ENCODE measurements at regions of chr4 and their contacts with region 1.

Region 1: DNA sequence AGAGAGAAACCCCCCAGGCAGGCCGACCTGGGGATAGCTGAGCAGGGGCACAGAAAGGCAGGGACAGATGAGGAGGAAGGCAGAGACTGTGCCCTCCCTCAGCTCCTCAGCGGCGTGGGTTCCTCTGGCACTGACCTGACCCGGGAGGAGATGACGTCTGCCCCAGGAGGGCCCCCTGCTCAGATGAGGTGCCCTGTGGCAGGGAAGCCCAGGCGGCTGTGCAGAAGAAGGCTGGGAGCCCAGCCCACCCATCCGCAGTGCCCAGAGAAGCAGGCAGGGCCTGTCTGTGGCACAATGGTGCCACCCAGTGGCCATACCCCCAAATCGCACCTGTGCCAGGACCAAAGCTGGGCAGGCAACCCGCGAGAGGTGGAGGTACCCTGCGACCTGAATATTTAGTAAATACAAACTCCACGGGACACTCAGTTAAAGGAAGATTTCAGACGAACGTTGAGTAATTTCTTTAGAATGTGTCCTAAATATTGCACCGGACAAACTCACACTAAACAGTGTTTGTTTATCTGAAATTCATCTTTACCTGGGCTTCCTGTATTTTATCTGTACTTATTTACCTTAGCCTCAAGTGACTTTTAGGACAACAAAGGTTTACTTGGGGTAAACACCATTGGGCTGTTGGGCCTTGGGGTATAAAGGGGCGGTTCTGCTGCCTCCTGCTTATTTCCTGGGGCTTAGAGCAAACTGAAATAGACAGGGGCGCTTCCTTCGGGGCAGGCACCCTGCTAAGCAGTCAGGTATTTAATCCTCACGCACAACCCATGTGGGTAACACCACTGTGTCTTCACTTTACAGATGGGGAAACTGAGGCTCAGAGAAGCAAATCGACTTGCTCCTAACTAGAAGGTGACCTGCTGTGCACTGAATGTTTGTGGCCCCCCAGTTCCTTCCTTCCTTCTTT is 46.5 kb upstream of the HMX1 start:
- DNase-seq: no peak
- ATAC-seq: peak; percentile 99
- H3K4me3 ChIP-seq: no peak overlapping the region
- H3K27ac ChIP-seq: no peak overlapping the region
- H3K4me1 ChIP-seq: no peaks in the 10 kb centered on the region
- H3K27me3 ChIP-seq: no peaks in the 10 kb centered on the region
- CTCF ChIP-seq: peak; percentile 89 to 94 (median 92)
- EP300 ChIP-seq: no peak
- POLR2A ChIP-seq: no peak
- RAD21 ChIP-seq: peak; percentile 87

Region 2: GRCh38 chr4:8468746-8469535 is 449.2 kb before region 1 on chr4:
- CTCF ChIA-PET with region 1: no interaction called
- POLR2A ChIA-PET with region 1: no interaction called
- RAD21 ChIA-PET with region 1: no interaction called
- SMC1A ChIA-PET with region 1: no interaction called
- in situ Hi-C with region 1: no loop called
- intact Hi-C with region 1: loop called (anchors 5 kb)
- DNase-seq: peak; percentile 5
- ATAC-seq: peak; percentile 96
- H3K4me3 ChIP-seq: no peak overlapping the region
- H3K27ac ChIP-seq: no peak overlapping the region
- H3K4me1 ChIP-seq: no peaks in the 10 kb centered on the region
- H3K27me3 ChIP-seq: no peaks in the 10 kb centered on the region
- CTCF ChIP-seq: peak; percentile 90 to 98 (median 92)
- EP300 ChIP-seq: no peak
- POLR2A ChIP-seq: no peak
- RAD21 ChIP-seq: peak; percentile 82

Region 3: GRCh38 chr4:8607603-8608481 is 310.3 kb before region 1 on chr4:
- CTCF ChIA-PET with region 1: interaction called, 11 read pairs
- POLR2A ChIA-PET with region 1: no interaction called
- RAD21 ChIA-PET with region 1: interaction called, 8 read pairs
- SMC1A ChIA-PET with region 1: interaction called, 6 read pairs
- in situ Hi-C with region 1: loop called (anchors 10 kb)
- intact Hi-C with region 1: loop called (anchors 1 kb)
- DNase-seq: no peak
- ATAC-seq: peak; percentile 85
- H3K4me3 ChIP-seq: no peak overlapping the region
- H3K27ac ChIP-seq: no peak overlapping the region
- H3K4me1 ChIP-seq: no peaks in the 10 kb centered on the region
- H3K27me3 ChIP-seq: no peaks in the 10 kb centered on the region
- CTCF ChIP-seq: peak; percentile 70 to 98 (median 83)
- EP300 ChIP-seq: no peak
- POLR2A ChIP-seq: no peak
- RAD21 ChIP-seq: peak; percentile 67

Region 4: DNA sequence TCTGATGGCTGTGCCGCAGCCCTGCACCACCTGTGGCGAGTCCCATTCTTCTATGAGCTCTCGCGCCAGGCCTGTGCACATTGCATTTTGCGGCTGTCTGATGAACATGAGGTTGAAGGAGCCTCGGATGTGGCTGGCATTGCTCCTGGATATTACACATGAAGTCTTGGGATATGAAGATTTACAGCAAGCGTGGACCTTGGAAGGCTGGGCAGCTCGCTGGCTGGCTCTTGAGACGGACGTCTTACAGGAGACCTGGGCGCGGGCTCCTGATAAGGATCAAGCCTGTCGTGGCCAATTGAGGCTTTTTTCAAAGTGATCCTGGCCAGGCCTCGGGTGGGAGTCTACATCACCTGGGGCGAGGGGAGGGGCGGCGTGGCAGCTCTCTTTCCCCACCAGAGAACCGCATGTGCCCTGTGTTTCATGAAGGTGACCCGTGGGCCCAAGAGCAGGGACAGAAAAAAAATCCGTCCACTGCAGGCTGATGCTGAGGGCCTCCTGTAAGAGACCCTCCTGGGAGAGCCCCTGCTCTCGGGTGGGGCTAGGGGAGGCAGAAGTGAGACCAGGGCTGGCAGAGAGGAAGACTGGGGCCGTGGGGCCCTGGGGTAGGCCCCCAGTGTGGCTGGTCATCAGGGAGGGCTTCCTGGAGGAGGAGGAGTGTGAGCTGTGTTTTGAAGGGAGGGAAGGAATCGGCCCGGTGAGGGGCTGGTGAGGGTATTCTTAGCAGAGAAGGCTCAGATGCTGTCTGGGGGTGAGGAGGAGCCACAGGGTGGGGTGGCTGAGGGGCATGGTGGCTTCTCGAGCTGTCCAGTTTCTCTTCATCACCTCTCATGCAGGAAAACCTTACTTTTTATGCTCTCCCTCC is 302.0 kb before region 1 on chr4:
- CTCF ChIA-PET with region 1: no interaction called
- POLR2A ChIA-PET with region 1: no interaction called
- RAD21 ChIA-PET with region 1: no interaction called
- SMC1A ChIA-PET with region 1: no interaction called
- in situ Hi-C with region 1: loop called (anchors 10 kb)
- intact Hi-C with region 1: no loop called
- DNase-seq: no peak
- ATAC-seq: no peak
- H3K4me3 ChIP-seq: no peak overlapping the region
- H3K27ac ChIP-seq: no peak overlapping the region
- H3K4me1 ChIP-seq: no peaks in the 10 kb centered on the region
- H3K27me3 ChIP-seq: no peaks in the 10 kb centered on the region; a peak in 1 of 4 replicates
- CTCF ChIP-seq: no peak
- EP300 ChIP-seq: no peak
- POLR2A ChIP-seq: no peak
- RAD21 ChIP-seq: no peak

Region 5: GRCh38 chr4:8688041-8688937 is 229.8 kb before region 1 on chr4:
- CTCF ChIA-PET with region 1: interaction called, 6 read pairs
- POLR2A ChIA-PET with region 1: no interaction called
- RAD21 ChIA-PET with region 1: no interaction called
- SMC1A ChIA-PET with region 1: no interaction called
- in situ Hi-C with region 1: no loop called
- intact Hi-C with region 1: loop called (anchors 1 kb)
- DNase-seq: no peak
- ATAC-seq: peak; percentile 67
- H3K4me3 ChIP-seq: no peak overlapping the region
- H3K27ac ChIP-seq: no peak overlapping the region
- H3K4me1 ChIP-seq: no peaks in the 10 kb centered on the region
- H3K27me3 ChIP-seq: no peaks in the 10 kb centered on the region
- CTCF ChIP-seq: peak; percentile 32 to 60 (median 42); a peak in 4 of 6 replicates
- EP300 ChIP-seq: no peak
- POLR2A ChIP-seq: no peak
- RAD21 ChIP-seq: peak; percentile 37

Region 6: DNA sequence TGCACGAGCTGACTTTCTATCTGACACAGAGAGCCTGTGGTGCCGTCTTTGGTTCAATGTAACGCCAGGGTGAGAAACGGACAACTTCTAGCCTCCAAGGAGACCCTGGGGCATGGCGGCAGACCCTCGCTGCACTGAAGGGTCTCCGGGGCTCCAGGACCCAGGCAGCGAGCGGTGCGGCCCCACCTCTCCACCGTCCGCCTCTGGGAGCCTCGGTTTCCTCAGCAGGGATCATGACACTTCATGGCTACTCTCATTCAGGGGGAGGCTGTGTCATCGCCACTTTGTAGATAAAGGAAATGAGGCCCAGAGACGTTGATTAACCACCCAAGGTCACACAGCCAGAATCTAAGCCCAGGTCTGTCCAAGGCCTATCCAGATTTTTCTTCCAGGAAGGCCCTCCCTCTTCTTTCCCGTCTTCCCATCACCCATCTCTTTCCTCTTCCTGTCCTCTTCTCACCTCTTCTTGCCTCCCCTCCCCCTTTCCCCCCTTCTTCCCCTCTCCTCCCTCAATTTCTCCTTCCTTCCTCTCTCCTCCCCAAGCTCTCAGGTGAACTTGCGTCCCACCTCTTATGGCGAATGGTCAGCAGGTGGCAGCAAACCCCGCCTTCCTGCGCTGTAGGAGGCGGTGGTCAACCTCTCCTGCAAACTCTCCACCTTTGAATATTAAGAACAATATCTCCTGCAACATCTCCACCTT is 22.8 kb after region 1 on chr4:
- CTCF ChIA-PET with region 1: no interaction called
- POLR2A ChIA-PET with region 1: no interaction called
- RAD21 ChIA-PET with region 1: no interaction called
- SMC1A ChIA-PET with region 1: no interaction called
- in situ Hi-C with region 1: no loop called
- intact Hi-C with region 1: no loop called
- DNase-seq: no peak
- ATAC-seq: peak; percentile 46; the same call in 1 of the 3 replicates
- H3K4me3 ChIP-seq: no peak overlapping the region
- H3K27ac ChIP-seq: no peak overlapping the region
- H3K4me1 ChIP-seq: no peaks in the 10 kb centered on the region
- H3K27me3 ChIP-seq: no peaks in the 10 kb centered on the region
- CTCF ChIP-seq: peak in 1 of 3 experiments; percentile 15; a peak in 1 of 6 replicates
- EP300 ChIP-seq: no peak
- POLR2A ChIP-seq: no peak
- RAD21 ChIP-seq: no peak